ENCODE measurements at regions of chr17 and their contacts with region 1.

Region 1: GRCh38 chr17:75738218-75738802 is 17.1 kb downstream of the ITGB4 start:
- DNase-seq: no peak
- H3K4me3 ChIP-seq: no peak overlapping the region
- H3K27ac ChIP-seq: no peak overlapping the region
- H3K4me1 ChIP-seq: no peaks in the 10 kb centered on the region
- H3K27me3 ChIP-seq: no peaks in the 10 kb centered on the region
- CTCF ChIP-seq: no peak

Region 2: DNA sequence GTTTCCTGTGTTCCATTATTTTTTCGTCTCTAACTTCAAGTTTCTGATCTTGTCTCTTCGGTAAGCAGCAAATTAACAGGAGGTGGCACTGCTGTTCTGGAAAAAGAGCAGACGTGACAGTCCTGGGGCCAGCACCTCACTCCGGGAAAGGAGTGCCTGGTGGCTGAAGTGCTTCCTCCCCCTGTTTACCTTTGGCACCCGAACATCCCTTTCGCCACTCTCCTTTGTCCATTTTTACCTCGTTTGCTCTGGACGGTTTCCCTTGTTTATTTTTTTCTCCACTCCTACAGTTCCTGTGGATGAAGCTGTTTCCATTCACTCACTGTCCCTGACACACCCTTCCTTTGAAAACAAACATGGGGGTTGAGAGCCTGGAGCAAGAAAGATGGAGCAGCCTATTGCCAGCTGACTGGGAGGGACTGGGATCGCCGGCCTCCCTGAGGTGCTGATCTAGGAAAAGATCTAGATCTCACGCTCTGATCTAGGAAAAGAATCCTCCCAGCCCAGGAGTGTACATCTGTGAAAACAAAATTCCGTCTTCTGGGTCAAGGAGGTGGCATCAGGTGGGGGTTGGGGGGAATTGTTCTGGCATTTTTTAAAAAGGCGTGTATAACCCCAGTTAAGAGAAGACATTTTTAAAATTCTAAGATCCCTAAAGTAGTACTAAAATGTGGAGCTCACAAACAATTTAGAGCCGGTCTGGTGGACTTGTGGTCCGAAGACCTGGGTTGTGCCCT is 58.4 kb before region 1 on chr17:
- intact Hi-C with region 1: loop called (anchors 10 kb)
- DNase-seq: peak in 1 of 5 donors; percentile 77
- H3K4me3 ChIP-seq: no peak overlapping the region
- H3K27ac ChIP-seq: no peak overlapping the region
- H3K4me1 ChIP-seq: peaks cover 0 to 2% (median 0%) of the 10 kb centered on the region in 3 donors
- H3K27me3 ChIP-seq: no peaks in the 10 kb centered on the region
- CTCF ChIP-seq: peak; percentile 21